HepG2 (cell line): ENCODE measurements at regions of chr7 and their contacts with region 1.

Region 1: GRCh38 chr7:152894273-152895170 is 135.0 kb downstream of the ACTR3B start:
- DNase-seq: peak; percentile 21
- ATAC-seq: peak; percentile 91
- H3K4me3 ChIP-seq: no peak overlapping the region; a peak in 1 of 6 replicates
- H3K27ac ChIP-seq: no peak overlapping the region
- H3K4me1 ChIP-seq: peaks cover 20% of the 10 kb centered on the region
- H3K27me3 ChIP-seq: no peaks in the 10 kb centered on the region
- CTCF ChIP-seq: peak; percentile 85
- EP300 ChIP-seq: no peak
- POLR2A ChIP-seq: no peak
- RAD21 ChIP-seq: peak; percentile 99

Region 2: DNA sequence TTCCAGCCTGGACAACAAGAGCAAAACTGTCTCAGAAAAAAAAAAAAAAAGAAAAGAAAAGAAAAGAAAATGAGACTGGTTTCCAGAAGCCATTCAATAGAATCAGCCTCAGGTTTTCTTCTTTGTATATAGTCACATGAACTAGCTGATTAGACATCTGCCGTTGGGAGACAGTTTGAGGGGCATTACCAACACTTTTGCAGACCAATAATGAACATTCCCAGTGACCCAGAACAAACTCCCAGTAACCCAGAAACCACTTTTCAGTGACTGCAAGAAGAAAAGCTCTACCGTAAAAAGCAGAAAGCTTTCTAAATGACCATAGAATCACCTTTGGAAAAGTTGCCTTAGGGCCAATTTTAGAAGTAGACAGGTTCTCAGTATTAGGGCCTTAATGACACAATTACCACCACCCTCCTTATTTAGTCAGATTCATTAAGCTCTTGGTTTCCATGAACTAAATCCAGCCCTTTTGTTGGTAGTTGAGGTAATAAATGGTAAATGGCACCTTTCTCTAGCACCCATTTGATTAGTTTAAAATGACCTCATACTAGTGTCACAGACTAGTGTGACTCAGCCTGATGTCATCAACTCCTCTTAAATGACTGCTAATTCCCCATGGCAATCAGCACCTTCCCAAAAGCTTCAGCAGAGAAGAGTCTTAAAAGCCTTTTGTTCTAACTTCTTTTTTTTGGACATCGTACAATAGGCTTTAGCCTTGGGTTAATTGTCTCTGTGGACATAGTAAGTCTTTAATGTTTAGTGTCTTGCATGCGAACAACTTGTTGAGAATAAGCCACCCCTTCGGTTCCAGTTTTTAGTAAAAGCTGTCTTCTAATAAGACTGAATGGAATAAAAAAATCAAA is 185.0 kb before region 1 on chr7:
- CTCF ChIA-PET with region 1: no interaction called
- POLR2A ChIA-PET with region 1: no interaction called
- in situ Hi-C with region 1: no loop called
- intact Hi-C with region 1: no loop called
- DNase-seq: no peak
- ATAC-seq: no peak
- H3K4me3 ChIP-seq: no peak overlapping the region
- H3K27ac ChIP-seq: no peak overlapping the region
- H3K4me1 ChIP-seq: peaks cover 12% of the 10 kb centered on the region
- H3K27me3 ChIP-seq: no peaks in the 10 kb centered on the region
- CTCF ChIP-seq: no peak
- EP300 ChIP-seq: no peak
- POLR2A ChIP-seq: no peak
- RAD21 ChIP-seq: no peak

Region 3: DNA sequence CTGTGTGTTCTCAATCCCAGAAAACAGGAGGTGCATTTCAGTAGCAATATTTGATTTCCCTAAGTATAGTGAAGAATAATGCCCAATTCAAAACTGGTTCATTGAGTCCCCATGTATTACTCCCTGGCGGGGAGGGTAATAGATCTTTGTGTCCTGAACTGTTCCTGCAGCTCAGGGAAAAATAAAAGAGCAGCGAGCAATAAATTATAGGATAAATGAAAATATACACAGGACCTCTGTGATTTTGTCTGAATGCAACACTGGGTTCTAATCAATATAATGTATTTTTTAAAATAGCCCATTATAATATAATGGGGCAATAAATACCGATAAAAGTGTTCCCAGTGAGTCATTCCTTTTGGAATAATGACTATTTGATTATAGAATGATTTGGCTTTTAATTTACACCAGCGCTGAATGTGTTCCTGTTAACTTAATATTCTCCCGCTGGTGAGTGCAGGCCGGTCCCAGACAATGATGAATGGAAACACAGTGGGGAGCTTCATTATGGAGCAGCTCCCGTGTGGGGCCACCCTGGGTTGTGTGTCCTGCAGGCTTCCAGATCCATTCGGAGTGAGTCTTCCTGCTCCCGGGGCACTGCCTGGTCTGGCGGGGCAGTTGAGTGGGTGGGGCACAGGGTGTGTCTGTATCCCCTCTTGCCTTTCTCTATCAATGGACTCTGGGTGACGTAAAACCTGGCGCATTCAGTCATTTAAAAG is 128.1 kb after region 1 on chr7:
- CTCF ChIA-PET with region 1: no interaction called
- POLR2A ChIA-PET with region 1: no interaction called
- in situ Hi-C with region 1: no loop called
- intact Hi-C with region 1: loop called (anchors 10 kb)
- DNase-seq: no peak
- ATAC-seq: no peak
- H3K4me3 ChIP-seq: no peak overlapping the region
- H3K27ac ChIP-seq: no peak overlapping the region
- H3K4me1 ChIP-seq: no peaks in the 10 kb centered on the region
- H3K27me3 ChIP-seq: peaks cover 0 to 13% of the 10 kb centered on the region in 2 experiments; a peak in 2 of 5 replicates
- CTCF ChIP-seq: no peak
- EP300 ChIP-seq: no peak
- POLR2A ChIP-seq: no peak
- RAD21 ChIP-seq: no peak

Region 4: GRCh38 chr7:153193144-153193595 is 298.6 kb after region 1 on chr7:
- CTCF ChIA-PET with region 1: no interaction called
- POLR2A ChIA-PET with region 1: no interaction called
- in situ Hi-C with region 1: no loop called
- intact Hi-C with region 1: loop called (anchors 10 kb)
- DNase-seq: peak; percentile 12
- ATAC-seq: peak; percentile 100
- H3K4me3 ChIP-seq: no peak overlapping the region
- H3K27ac ChIP-seq: no peak overlapping the region
- H3K4me1 ChIP-seq: no peaks in the 10 kb centered on the region
- H3K27me3 ChIP-seq: no peaks in the 10 kb centered on the region
- CTCF ChIP-seq: peak; percentile 91
- EP300 ChIP-seq: no peak
- POLR2A ChIP-seq: no peak
- RAD21 ChIP-seq: peak; percentile 61